ENCODE measurements at regions of chr17 and their contacts with region 1.

Region 1: DNA sequence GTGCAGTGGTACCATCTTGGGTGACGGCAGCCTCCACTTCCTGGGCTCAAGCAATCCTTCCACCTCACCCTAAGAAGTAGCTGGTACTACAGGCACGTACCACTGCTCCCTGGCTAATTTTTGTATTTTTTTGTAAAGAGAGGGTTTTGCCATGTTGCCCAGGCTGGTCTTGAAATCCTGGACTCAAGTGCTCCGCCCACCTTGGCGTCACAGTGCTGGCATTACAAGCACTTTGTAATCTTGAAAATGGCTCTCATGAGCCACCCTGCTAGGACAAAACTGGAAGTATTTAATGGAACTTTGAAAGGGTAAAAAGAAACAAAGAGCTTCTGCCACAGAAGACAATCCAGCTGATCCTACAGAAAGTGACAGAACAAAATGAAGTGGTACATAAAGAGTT is 9.2 kb downstream of the SUMO2 start:
- DNase-seq: no peak
- ATAC-seq: no peak
- H3K4me3 ChIP-seq: no peak overlapping the region
- H3K27ac ChIP-seq: no peak overlapping the region
- H3K4me1 ChIP-seq: 0 out of 3 replicates have a peak, but pooled peaks cover 3% of the 10 kb centered on the region
- CTCF ChIP-seq: no peak
- EP300 ChIP-seq: no peak
- POLR2A ChIP-seq: no peak
- RAD21 ChIP-seq: no peak

Region 2: DNA sequence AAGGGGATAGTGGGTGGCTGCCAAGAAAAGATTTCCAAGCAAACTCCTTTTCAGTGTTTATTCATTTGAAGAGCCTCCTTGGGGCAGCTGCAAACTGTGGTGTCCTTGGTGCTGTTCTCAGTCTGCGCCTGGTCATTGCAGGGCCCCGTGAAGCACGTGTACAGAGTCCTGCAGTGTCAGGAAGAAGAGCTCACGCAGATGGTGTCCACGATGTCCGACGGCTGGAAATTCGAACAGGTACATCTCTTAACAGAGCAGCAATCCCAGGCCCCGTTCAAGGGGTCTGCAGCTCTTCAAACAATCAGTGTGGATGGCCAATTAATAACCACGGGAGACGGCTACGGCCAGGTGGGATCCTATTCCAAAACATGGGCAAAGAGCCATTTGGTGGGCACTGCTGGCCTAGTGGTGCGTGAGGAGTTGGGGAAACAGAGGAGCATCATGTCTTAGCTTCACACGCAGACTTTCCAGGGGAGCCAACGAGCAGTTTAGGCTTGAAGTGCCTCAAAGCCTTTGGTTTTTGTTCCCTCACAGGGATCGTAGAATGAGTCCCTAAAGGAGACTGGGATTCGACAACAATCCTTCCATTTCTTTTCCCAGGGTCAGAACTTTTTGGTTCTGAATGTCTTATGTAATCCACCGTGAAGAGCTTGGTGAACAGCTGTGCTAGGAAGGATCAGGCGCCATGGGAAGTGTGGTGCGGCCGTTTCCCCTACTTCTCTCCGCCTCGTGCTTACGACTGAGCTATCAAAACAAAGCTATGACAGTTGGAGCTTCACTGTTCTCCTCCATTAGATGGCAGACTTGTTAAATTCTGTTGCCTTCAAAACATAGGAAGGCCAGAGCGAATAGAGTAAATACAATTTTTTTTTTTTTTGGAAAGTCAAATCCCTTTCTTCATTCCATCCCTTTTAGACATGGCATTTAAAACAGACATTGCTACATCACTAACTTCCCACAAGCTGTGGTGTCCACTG is 113.9 kb before region 1 on chr17:
- CTCF ChIA-PET with region 1: interaction called, 20 read pairs
- POLR2A ChIA-PET with region 1: no interaction called
- DNase-seq: peak in 1 of 2 experiments; percentile 70
- ATAC-seq: peak; percentile 77 to 85
- H3K4me3 ChIP-seq: no peak overlapping the region
- H3K27ac ChIP-seq: no peak overlapping the region
- H3K4me1 ChIP-seq: no peaks in the 10 kb centered on the region
- CTCF ChIP-seq: peak; percentile 62
- EP300 ChIP-seq: no peak
- POLR2A ChIP-seq: no peak
- RAD21 ChIP-seq: peak; percentile 62 to 71

Region 3: DNA sequence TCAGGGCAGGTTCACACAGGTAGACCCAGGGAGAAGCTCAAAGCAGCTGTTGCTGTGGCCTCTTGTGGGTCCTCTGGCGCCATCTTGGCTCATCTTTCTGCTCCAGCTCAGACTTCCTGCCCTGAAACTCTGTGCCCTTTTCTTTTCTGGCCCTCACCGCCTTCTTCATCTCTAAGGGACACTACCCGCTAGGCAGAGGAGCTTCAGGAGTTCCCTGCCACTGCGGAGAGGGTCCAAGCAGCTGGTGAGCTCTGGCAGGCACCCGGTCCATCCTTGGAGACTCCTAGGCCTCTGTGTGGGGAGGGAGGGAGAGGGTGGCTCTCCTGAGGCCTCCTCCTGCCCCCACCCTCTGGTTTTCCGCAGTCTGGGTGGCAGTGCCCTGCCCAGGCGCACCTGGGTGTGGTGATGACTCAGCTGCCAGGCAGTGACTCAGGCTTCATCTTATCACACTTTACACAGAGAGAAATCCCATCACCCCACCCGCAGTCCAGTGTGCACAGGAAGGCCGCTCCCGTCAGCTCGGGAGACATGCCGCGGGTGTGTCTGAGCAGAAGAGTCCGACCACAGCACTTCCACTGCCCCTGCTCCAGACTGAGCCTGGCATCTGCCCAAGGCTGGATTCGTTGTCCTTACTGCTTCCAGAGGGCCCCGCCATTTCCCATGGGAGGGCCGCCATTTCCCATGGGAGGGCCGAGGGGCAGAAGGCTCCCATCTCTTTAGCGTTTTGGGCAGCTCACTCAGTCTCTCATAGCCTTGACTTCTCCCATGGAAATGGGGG is 49.3 kb before region 1 on chr17:
- CTCF ChIA-PET with region 1: interaction called, 270 read pairs
- POLR2A ChIA-PET with region 1: interaction called, 5 read pairs
- DNase-seq: peak; percentile 99 to 100
- ATAC-seq: peak; percentile 93
- H3K4me3 ChIP-seq: peak overlapping the region; percentile 31
- H3K27ac ChIP-seq: peak overlapping the region; percentile 92 to 97
- H3K4me1 ChIP-seq: peaks cover 61% of the 10 kb centered on the region
- CTCF ChIP-seq: no peak; the same call in 2 of the 3 replicates
- EP300 ChIP-seq: peak; percentile 30 to 80; a peak in 3 of 5 replicates
- POLR2A ChIP-seq: peak; percentile 62
- RAD21 ChIP-seq: peak; percentile 30 to 39; a peak in 4 of 5 replicates

Region 4: DNA sequence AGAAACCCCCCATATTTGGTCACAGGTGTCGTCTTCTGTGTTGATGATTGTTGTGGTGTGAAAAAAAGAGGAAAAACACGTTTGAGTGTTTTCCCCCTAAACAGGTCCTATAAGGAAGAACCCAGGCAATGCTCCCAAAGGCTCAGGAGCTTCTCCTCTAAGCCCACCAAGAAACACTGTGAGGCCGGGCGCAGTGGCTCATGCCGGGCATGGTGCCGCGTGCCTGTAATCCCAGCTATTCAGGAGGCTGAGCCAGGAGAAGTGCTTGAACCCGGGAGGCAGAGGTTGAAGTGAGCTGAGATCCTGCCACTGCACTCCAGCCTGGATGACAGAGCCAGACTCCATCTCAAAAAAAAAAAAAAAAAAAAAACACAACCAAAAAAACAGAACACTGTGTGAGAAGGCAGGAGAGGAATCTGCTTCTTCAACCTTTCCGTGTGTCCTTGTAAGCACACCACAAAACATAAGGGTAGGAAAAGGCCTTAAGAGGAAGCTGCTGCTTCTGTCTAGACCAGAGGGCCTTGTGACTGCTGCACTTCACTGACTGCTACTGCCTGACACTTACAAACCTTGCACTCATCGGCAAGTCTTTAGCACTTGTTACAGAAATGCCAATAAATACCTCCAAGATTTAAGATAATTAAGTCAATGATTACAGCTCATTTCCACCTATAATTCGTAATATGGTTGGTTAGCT is 28.6 kb before region 1 on chr17:
- CTCF ChIA-PET with region 1: interaction called, 25 read pairs
- POLR2A ChIA-PET with region 1: no interaction called
- DNase-seq: no peak
- ATAC-seq: no peak
- H3K4me3 ChIP-seq: no peak overlapping the region
- H3K27ac ChIP-seq: no peak overlapping the region
- H3K4me1 ChIP-seq: peaks cover 25% of the 10 kb centered on the region
- CTCF ChIP-seq: no peak
- EP300 ChIP-seq: no peak
- POLR2A ChIP-seq: no peak
- RAD21 ChIP-seq: no peak

Region 5: DNA sequence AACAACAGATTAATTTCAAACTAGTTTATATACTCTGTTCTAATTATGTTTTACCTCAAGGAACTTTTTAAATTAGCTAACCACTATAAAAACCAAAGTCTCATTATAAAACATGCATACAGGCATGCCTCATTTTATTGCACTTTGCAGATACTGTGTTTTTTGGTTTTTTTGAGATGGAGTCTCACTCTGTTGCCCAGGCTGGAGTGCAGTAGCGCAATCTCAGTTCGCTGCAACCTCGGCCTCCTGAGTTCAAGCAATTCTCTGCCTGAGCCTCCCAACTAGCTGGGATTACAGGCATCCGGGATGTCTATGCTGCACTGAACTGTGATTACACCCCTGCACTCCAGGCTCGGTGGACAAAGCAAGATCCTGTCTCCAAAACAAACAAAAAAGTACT is 10.5 kb before region 1 on chr17:
- CTCF ChIA-PET with region 1: interaction called, 26 read pairs
- POLR2A ChIA-PET with region 1: interaction called, 6 read pairs
- DNase-seq: no peak
- ATAC-seq: no peak
- H3K4me3 ChIP-seq: no peak overlapping the region
- H3K27ac ChIP-seq: no peak overlapping the region
- H3K4me1 ChIP-seq: peaks cover 28% of the 10 kb centered on the region
- CTCF ChIP-seq: no peak
- EP300 ChIP-seq: no peak
- POLR2A ChIP-seq: no peak
- RAD21 ChIP-seq: no peak

Region 6: GRCh38 chr17:75199886-75200618 is 26.5 kb after region 1 on chr17:
- CTCF ChIA-PET with region 1: interaction called, 48 read pairs
- POLR2A ChIA-PET with region 1: interaction called, 9 read pairs
- DNase-seq: no peak
- ATAC-seq: no peak
- H3K4me3 ChIP-seq: no peak overlapping the region
- H3K27ac ChIP-seq: no peak overlapping the region
- H3K4me1 ChIP-seq: peaks cover 4% of the 10 kb centered on the region; the same call in 1 of the 3 replicates
- CTCF ChIP-seq: no peak
- EP300 ChIP-seq: no peak
- POLR2A ChIP-seq: no peak
- RAD21 ChIP-seq: no peak

Region 7: GRCh38 chr17:75731716-75732498 is 558.4 kb after region 1 on chr17:
- CTCF ChIA-PET with region 1: no interaction called
- POLR2A ChIA-PET with region 1: no interaction called
- DNase-seq: no peak
- ATAC-seq: no peak
- H3K4me3 ChIP-seq: no peak overlapping the region
- H3K27ac ChIP-seq: no peak overlapping the region
- H3K4me1 ChIP-seq: no peaks in the 10 kb centered on the region
- CTCF ChIP-seq: no peak
- EP300 ChIP-seq: no peak
- POLR2A ChIP-seq: no peak
- RAD21 ChIP-seq: no peak

Measured in A549 (cell line).